ENCODE measurements at regions of chr3 and their contacts with region 1.

Region 1: GRCh38 chr3:150183678-150184425 is 213.2 kb upstream of the PFN2 start:
- DNase-seq: peak; percentile 25 to 71 (median 40)
- ATAC-seq: peak; percentile 100
- H3K4me3 ChIP-seq: 0 out of 2 replicates have a peak overlapping the region, but pooled peaks have one; percentile 4
- H3K27ac ChIP-seq: no peak overlapping the region
- H3K4me1 ChIP-seq: peaks cover 0 to 5% of the 10 kb centered on the region in 2 experiments; a peak in 1 of 5 replicates
- H3K27me3 ChIP-seq: peaks cover 3 to 9% of the 10 kb centered on the region in 2 experiments; a peak in 3 of 5 replicates
- CTCF ChIP-seq: peak; percentile 72 to 79 (median 75)
- EP300 ChIP-seq: no peak
- POLR2A ChIP-seq: no peak
- RAD21 ChIP-seq: peak; percentile 74 to 82

Region 2: GRCh38 chr3:149879872-149880271 is 304.0 kb before region 1 on chr3:
- CTCF ChIA-PET with region 1: no interaction called
- POLR2A ChIA-PET with region 1: no interaction called
- in situ Hi-C with region 1: no loop called
- intact Hi-C with region 1: loop called (anchors 1 kb)
- DNase-seq: peak; percentile 6 to 55 (median 8)
- ATAC-seq: peak; percentile 94
- H3K4me3 ChIP-seq: no peak overlapping the region
- H3K27ac ChIP-seq: no peak overlapping the region
- H3K4me1 ChIP-seq: no peaks in the 10 kb centered on the region; a peak in 1 of 5 replicates
- H3K27me3 ChIP-seq: no peaks in the 10 kb centered on the region
- CTCF ChIP-seq: peak; percentile 31 to 60 (median 59); a peak in 5 of 6 replicates
- EP300 ChIP-seq: no peak
- POLR2A ChIP-seq: no peak
- RAD21 ChIP-seq: no peak; a peak in 1 of 4 replicates

Region 3: DNA sequence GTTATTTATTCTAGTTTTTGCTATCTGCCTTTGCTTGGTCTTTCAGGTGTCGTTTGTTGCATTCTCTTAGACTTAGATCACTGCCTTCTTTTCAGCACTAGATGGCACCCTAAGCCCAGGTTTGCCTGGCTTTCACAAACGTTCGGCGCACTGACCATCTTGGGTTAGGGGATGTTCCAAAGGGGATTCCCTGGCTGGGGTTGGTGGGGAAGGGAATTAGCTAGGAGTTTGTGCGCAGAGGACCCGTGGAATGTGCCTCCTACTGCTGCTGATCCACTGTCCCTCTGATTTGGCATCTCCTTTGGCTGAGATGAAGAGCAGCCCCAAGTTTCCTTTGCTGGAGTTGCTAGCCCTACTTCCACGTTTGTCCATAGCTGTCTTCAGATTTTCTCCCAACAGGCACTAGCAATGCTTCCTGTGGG is 247.0 kb before region 1 on chr3:
- CTCF ChIA-PET with region 1: interaction called, 5 read pairs
- POLR2A ChIA-PET with region 1: no interaction called
- in situ Hi-C with region 1: no loop called
- intact Hi-C with region 1: loop called (anchors 1 kb)
- DNase-seq: peak; percentile 35 to 69 (median 54)
- ATAC-seq: peak; percentile 90
- H3K4me3 ChIP-seq: no peak overlapping the region
- H3K27ac ChIP-seq: no peak overlapping the region
- H3K4me1 ChIP-seq: no peaks in the 10 kb centered on the region; a peak in 1 of 5 replicates
- H3K27me3 ChIP-seq: no peaks in the 10 kb centered on the region
- CTCF ChIP-seq: peak; percentile 70 to 80 (median 77)
- EP300 ChIP-seq: no peak
- POLR2A ChIP-seq: no peak
- RAD21 ChIP-seq: peak; percentile 64 to 76

Region 4: GRCh38 chr3:149969940-149970715 is 213.7 kb before region 1 on chr3:
- CTCF ChIA-PET with region 1: interaction called, 10 read pairs
- POLR2A ChIA-PET with region 1: no interaction called
- in situ Hi-C with region 1: no loop called
- intact Hi-C with region 1: loop called (anchors 1 kb)
- DNase-seq: peak in 2 of 4 experiments; percentile 9 to 14
- ATAC-seq: no peak
- H3K4me3 ChIP-seq: peak overlapping the region; percentile 45
- H3K27ac ChIP-seq: no peak overlapping the region
- H3K4me1 ChIP-seq: peaks cover 0 to 18% of the 10 kb centered on the region in 2 experiments; a peak in 3 of 5 replicates
- H3K27me3 ChIP-seq: peaks cover 6 to 13% of the 10 kb centered on the region in 2 experiments; a peak in 3 of 5 replicates
- CTCF ChIP-seq: no peak
- EP300 ChIP-seq: no peak
- POLR2A ChIP-seq: no peak
- RAD21 ChIP-seq: no peak

Region 5: DNA sequence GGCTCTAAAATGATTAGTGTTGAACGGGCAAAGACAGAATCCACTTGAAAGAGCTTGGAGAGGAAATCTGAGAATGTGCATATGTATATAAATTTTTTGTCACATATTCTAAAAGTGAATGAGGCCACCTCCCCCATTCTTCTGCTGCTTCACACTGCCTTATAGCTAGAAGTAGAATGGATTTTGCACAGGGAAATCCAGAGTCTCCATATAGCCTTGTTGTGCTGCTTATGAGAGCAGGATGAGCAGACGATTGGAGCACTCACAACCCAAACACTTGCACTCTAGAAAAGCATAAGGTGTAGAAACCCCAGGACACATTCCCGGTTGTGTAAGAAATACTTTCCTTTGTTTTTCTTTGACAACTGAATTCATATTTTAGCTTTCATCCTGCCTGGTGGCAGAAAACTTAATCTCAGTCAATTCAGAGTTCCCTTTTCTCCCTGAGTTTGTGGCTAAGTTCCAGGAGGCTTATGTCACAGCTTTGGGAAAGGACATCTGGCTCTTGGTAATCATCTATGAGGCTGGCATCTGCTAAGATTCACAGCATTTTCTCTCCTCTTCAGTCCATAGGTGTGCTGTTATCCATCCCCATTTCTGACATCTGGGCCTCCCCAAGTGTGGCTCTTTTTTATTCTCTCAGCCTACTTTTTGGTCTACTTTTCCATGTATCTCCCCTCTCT is 24.8 kb before region 1 on chr3:
- CTCF ChIA-PET with region 1: no interaction called
- POLR2A ChIA-PET with region 1: no interaction called
- in situ Hi-C with region 1: no loop called
- intact Hi-C with region 1: no loop called
- DNase-seq: no peak
- ATAC-seq: no peak
- H3K4me3 ChIP-seq: no peak overlapping the region
- H3K27ac ChIP-seq: no peak overlapping the region
- H3K4me1 ChIP-seq: no peaks in the 10 kb centered on the region
- H3K27me3 ChIP-seq: no peaks in the 10 kb centered on the region
- CTCF ChIP-seq: no peak
- EP300 ChIP-seq: no peak
- POLR2A ChIP-seq: no peak
- RAD21 ChIP-seq: no peak